H1 (cell line): ENCODE measurements at regions of chr1 and their contacts with region 1.

Region 1: GRCh38 chr1:53442299-53442698 is 16.9 kb upstream of the DMRTB1 start:
- DNase-seq: peak in 1 of 2 experiments; percentile 41
- H3K4me3 ChIP-seq: no peak overlapping the region
- H3K27ac ChIP-seq: no peak overlapping the region
- H3K4me1 ChIP-seq: peaks cover 3 to 11% (median 4%) of the 10 kb centered on the region in 4 experiments; a peak in 5 of 7 replicates
- H3K27me3 ChIP-seq: no peaks in the 10 kb centered on the region; a peak in 1 of 7 replicates
- CTCF ChIP-seq: no peak
- EP300 ChIP-seq: no peak
- POLR2A ChIP-seq: no peak
- RAD21 ChIP-seq: no peak

Region 2: GRCh38 chr1:53430261-53430660 is 12.0 kb before region 1 on chr1:
- CTCF ChIA-PET with region 1: interaction called, 18 read pairs
- POLR2A ChIA-PET with region 1: interaction called, 7 read pairs
- DNase-seq: no peak
- H3K4me3 ChIP-seq: peak overlapping the region in 2 of 4 experiments; percentile 2 to 43; a peak in 2 of 8 replicates
- H3K27ac ChIP-seq: peak overlapping the region; percentile 79
- H3K4me1 ChIP-seq: peaks cover 0 to 13% (median 8%) of the 10 kb centered on the region in 4 experiments; a peak in 4 of 7 replicates
- H3K27me3 ChIP-seq: no peaks in the 10 kb centered on the region
- CTCF ChIP-seq: no peak
- EP300 ChIP-seq: no peak
- POLR2A ChIP-seq: peak in 1 of 2 experiments; percentile 7; a peak in 1 of 3 replicates
- RAD21 ChIP-seq: no peak

Region 3: GRCh38 chr1:53462769-53463501 is 20.6 kb after region 1 on chr1:
- CTCF ChIA-PET with region 1: interaction called, 16 read pairs
- POLR2A ChIA-PET with region 1: no interaction called
- DNase-seq: no peak
- H3K4me3 ChIP-seq: no peak overlapping the region
- H3K27ac ChIP-seq: no peak overlapping the region
- H3K4me1 ChIP-seq: no peaks in the 10 kb centered on the region; a peak in 3 of 7 replicates
- H3K27me3 ChIP-seq: peaks cover 0 to 4% (median 0%) of the 10 kb centered on the region in 4 experiments; a peak in 1 of 7 replicates
- CTCF ChIP-seq: no peak
- EP300 ChIP-seq: no peak
- POLR2A ChIP-seq: no peak
- RAD21 ChIP-seq: no peak

Region 4: DNA sequence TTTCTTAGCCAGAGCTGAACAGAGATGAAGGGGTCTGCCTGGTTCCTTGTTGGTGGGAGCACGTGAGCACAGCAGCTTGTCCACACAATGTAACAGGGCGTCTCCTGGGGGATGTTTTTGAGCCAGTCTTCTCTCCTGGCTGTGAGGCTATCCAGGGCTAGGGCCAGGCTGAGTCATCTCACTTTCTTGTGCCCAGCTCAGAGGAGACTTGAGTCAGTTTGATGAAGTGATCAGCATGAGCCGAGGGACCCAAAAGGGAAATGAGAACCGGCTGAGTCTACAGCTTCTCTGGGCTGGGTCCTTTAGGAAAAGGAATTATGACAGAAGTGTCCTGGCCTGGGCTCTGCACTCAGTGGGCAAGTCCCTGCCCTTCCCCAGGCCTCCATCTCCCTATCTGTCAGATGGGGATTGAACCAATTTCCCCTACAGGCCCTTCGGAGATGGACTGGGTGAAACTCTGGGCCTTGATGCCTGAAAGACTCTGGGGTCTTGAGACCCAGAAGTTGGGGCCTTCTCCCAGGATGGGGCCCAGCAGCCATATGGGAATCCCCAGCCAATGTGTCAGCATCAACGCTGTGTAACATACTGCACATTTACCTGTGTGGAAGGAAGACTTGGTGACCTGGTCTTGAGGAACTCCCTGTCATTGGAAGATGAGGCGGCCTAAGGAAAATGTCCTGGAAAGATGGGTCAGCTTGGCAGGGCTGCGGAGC is 53.5 kb after region 1 on chr1:
- CTCF ChIA-PET with region 1: no interaction called
- POLR2A ChIA-PET with region 1: no interaction called
- DNase-seq: no peak
- H3K4me3 ChIP-seq: no peak overlapping the region
- H3K27ac ChIP-seq: no peak overlapping the region
- H3K4me1 ChIP-seq: no peaks in the 10 kb centered on the region; a peak in 1 of 7 replicates
- H3K27me3 ChIP-seq: no peaks in the 10 kb centered on the region; a peak in 1 of 7 replicates
- CTCF ChIP-seq: no peak
- EP300 ChIP-seq: no peak
- POLR2A ChIP-seq: no peak
- RAD21 ChIP-seq: no peak